ENCODE measurements at regions of chr17 and their contacts with region 1.

Region 1: DNA sequence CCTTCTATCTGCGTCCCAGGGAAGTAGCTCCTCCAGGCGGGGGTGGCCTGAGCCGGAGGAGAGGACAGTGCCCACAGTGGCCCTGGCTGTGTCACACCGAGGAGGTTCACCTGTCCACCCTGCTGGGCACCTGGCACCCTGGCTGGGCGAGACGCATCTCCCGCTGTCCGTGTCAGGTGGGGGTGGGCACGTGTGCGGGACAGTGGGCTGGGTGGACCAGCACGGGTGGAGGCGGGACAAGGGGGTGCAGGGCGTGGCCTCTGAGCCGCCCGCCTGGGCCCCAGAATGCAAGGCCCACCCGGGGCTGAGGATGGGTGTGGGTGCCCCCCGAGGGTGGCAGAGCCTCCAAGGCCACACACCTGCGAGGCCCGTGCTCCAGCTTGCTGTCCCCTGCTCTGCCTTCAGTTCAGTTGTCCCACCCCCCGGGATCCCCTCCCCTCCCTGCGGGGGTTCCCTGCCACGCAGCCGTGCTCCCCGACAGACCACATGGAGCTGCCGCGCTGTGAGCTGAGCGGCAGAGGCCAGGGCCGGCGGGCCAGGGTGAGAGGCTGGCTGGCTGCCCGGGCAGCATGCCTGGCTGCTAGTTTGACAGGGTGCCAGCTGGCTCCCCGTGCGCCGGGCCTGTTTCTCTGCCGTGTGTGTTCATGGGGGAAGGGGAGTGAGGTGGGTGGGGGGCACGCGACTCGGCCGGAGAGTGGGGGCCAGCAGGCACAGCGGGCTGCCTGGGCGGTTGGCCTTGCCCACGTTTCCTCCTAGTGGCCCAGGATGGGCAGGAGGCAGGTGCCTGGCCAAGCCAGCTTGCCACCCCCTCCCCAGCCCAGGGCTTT is 33.9 kb downstream of the BAHCC1 start:
- DNase-seq: peak; percentile 97
- H3K4me3 ChIP-seq: peak overlapping the region in 1 of 2 experiments; percentile 4; a peak in 1 of 4 replicates
- H3K27ac ChIP-seq: peak overlapping the region; percentile 15 to 78; a peak in 3 of 4 replicates
- H3K4me1 ChIP-seq: peaks cover 21 to 51% of the 10 kb centered on the region in 2 experiments; a peak in 3 of 4 replicates
- H3K27me3 ChIP-seq: no peaks in the 10 kb centered on the region
- CTCF ChIP-seq: no peak
- EP300 ChIP-seq: peak in 1 of 2 experiments; percentile 82; a peak in 3 of 4 replicates
- RAD21 ChIP-seq: no peak

Region 2: DNA sequence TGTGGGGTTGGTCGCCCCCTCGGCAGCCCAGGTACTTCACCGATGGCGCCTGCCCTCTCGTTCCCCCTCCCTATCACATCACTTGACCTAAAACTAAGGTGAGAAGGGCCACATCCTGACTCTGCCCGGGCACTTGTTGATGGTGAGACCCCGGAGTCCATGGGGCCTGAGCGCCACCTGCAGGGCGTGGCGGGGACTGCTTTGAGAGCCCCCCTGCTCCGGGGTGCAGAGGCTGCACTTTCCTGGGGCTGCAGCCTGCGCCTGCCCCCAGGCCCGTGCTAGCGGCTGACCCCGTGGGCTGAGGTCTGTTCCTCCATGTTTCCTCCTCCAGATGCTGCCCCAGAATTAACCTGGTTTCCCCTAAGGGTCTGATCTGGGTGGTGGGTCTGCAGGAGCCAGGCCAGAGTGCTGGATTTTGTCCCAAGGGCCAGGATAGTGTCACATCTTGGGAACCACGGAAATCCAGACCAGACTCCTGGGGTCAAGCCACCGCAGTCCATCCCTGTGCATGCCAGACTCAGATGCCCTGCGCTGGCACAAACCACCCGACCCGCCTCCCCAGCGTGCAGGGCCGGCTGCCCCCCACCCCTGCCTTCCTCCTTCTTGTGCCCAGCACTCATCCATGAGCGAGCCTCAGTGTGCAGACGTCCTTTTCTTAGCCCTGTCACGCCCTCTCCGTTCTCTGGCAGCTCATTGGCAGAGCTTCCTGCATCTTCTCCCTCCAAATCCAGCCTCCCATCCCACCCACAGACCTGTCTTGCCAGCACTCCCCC is 187.3 kb before region 1 on chr17:
- CTCF ChIA-PET with region 1: no interaction called
- POLR2A ChIA-PET with region 1: no interaction called
- DNase-seq: peak; percentile 96
- H3K4me3 ChIP-seq: no peak overlapping the region
- H3K27ac ChIP-seq: peak overlapping the region in 1 of 2 experiments; percentile 44; a peak in 1 of 4 replicates
- H3K4me1 ChIP-seq: peaks cover 0 to 57% of the 10 kb centered on the region in 2 experiments; a peak in 2 of 4 replicates
- H3K27me3 ChIP-seq: no peaks in the 10 kb centered on the region
- CTCF ChIP-seq: peak; percentile 89
- EP300 ChIP-seq: no peak
- RAD21 ChIP-seq: peak; percentile 82

Region 3: GRCh38 chr17:81294856-81295680 is 134.1 kb before region 1 on chr17 and contains the start of gene SLC38A10:
- CTCF ChIA-PET with region 1: interaction called, 48 read pairs
- POLR2A ChIA-PET with region 1: no interaction called
- DNase-seq: peak; percentile 100
- H3K4me3 ChIP-seq: peak within 1 kb of the TSS; percentile 76 to 88
- H3K27ac ChIP-seq: peak within 1 kb of the TSS; percentile 77 to 87
- H3K4me1 ChIP-seq: peaks cover 8 to 27% of the 10 kb centered on the region in 2 experiments; a peak in 2 of 4 replicates
- H3K27me3 ChIP-seq: no peaks in the 10 kb centered on the region
- CTCF ChIP-seq: peak; percentile 34; the same call in 1 of the 2 replicates
- EP300 ChIP-seq: peak in 1 of 2 experiments; percentile 30; a peak in 1 of 4 replicates
- RAD21 ChIP-seq: no peak
- polyA plus RNA-seq, gene SLC38A10: 64.3 and 82.2 TPM in 2 replicates

Region 4: GRCh38 chr17:81322271-81323082 is 106.7 kb before region 1 on chr17:
- CTCF ChIA-PET with region 1: interaction called, 16 read pairs
- POLR2A ChIA-PET with region 1: no interaction called
- DNase-seq: peak; percentile 94
- H3K4me3 ChIP-seq: no peak overlapping the region
- H3K27ac ChIP-seq: peak overlapping the region in 1 of 2 experiments; percentile 83; a peak in 1 of 4 replicates
- H3K4me1 ChIP-seq: peaks cover 0 to 49% of the 10 kb centered on the region in 2 experiments; a peak in 1 of 4 replicates
- H3K27me3 ChIP-seq: no peaks in the 10 kb centered on the region
- CTCF ChIP-seq: peak; percentile 56
- EP300 ChIP-seq: no peak
- RAD21 ChIP-seq: peak; percentile 43

Region 5: DNA sequence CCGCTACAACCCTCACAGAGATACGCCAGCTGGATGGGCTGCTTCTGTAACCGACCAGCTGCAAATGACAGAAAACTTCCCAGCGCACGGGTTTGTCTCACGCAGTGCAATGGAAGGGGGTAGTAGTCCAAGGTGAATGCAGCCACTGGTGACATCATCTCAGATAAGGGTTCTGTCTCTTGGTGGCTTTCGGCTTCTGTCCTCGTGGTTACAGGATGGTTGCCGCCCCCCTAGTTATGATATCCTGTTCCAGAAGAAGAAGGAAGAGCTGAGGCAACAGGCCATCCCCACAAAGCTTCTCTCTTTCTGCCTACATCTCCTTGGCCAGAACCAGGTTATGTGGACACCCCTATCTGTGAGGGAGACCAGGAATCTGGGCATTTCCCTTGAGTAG is 74.2 kb before region 1 on chr17:
- CTCF ChIA-PET with region 1: no interaction called
- POLR2A ChIA-PET with region 1: no interaction called
- DNase-seq: no peak
- H3K4me3 ChIP-seq: no peak overlapping the region
- H3K27ac ChIP-seq: no peak overlapping the region
- H3K4me1 ChIP-seq: peaks cover 0 to under 1% of the 10 kb centered on the region in 2 experiments; a peak in 1 of 4 replicates
- H3K27me3 ChIP-seq: no peaks in the 10 kb centered on the region
- CTCF ChIP-seq: no peak
- EP300 ChIP-seq: no peak
- RAD21 ChIP-seq: no peak

Region 6: GRCh38 chr17:81371910-81372760 is 57.0 kb before region 1 on chr17:
- CTCF ChIA-PET with region 1: interaction called, 34 read pairs
- POLR2A ChIA-PET with region 1: no interaction called
- DNase-seq: peak; percentile 91
- H3K4me3 ChIP-seq: no peak overlapping the region
- H3K27ac ChIP-seq: no peak overlapping the region
- H3K4me1 ChIP-seq: peaks cover 0 to 4% of the 10 kb centered on the region in 2 experiments; a peak in 1 of 4 replicates
- H3K27me3 ChIP-seq: peaks cover 16% of the 10 kb centered on the region; the same call in 1 of the 2 replicates
- CTCF ChIP-seq: peak; percentile 69
- EP300 ChIP-seq: no peak
- RAD21 ChIP-seq: peak; percentile 77

Region 7: DNA sequence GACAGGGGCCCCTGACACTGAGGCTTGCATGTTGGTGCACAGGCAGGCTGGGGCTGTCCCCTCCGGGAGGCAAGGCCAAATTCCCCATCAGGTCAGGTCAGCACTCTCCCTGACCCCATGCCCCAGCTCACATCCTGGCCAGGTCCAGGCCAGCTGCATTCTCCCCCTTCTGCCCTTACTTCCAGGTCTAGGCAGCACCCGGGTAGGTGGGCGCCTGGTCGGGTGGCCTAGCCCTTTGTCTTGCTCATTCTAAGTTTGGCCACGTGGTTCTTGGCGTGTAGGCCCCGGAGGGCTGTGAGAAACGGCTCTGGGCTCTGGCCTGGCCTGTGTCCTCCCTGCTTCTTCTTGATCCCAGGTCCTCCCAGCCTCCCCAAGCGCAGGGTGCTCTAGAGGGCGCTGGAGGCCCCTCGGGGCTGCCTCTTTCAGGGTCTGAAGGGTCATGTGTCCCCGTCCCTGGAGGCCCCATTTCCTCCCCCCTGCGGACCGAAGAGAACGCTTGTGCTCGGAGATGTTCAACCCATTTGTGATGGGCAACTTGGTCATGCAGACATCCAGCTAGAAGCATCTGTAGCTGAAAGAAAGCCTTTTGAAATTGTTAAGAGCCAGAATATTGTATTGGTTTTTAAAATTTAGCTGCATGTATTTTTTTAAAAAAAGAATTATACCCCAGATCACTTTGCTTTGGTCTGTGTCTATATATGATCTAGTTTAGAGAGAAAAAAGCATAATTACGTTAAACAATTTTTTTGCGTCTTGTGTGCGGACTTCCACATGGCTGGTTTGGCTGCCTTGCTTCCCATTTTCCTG is 27.2 kb before region 1 on chr17:
- CTCF ChIA-PET with region 1: interaction called, 104 read pairs
- POLR2A ChIA-PET with region 1: interaction called, 28 read pairs
- DNase-seq: peak; percentile 81
- H3K4me3 ChIP-seq: no peak overlapping the region
- H3K27ac ChIP-seq: no peak overlapping the region; a peak in 1 of 4 replicates
- H3K4me1 ChIP-seq: peaks cover 56 to 73% of the 10 kb centered on the region in 2 experiments
- H3K27me3 ChIP-seq: no peaks in the 10 kb centered on the region
- CTCF ChIP-seq: peak; percentile 63
- EP300 ChIP-seq: no peak
- RAD21 ChIP-seq: peak; percentile 47